ENCODE measurements at regions of chr1 and their contacts with region 1.

Region 1: DNA sequence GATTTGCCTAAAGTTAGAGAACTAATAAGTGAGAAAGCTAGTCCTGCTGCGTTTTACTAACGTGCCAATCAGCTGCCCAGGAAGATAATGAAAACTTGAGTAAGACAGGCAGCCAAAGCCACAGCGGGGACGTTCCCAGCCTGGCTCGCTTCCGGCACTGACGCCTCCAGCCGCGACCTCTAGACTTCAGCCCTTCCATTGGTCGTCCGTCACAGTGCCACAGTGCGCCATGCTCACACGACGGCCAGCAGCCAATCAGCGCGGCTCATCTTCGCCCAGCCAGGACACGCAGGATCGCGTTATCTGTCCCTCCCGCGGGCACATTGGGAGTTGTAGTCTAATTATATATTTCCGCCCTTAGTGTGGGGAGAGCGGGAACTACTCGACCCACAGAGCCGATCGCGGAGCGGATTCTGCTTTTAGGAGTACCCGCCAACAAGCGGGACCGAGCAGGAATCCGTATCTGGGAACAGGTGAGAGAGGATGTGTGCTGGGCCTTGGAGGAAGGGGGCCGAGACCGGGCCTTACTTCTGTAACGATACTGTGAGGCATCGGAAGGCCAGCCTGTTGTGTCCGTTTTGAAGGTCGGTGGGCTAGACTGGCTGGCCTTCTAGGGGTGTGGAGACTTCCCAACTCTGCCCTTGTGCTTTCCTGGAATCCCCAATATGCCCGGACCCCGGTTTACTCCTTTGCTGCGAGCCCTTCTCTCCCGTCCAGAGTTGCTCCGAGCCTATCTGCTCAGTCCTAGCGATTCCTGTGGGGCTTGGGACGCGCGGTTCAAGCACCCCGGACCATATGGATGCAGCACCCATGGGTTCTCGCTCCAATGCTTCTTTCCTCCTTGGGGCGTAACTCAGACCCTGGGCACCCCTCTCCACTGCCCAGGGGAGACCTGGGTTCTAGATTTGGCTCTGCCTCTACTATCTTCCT is at the start of gene FDPS:
- DNase-seq: peak; percentile 99
- ATAC-seq: peak; percentile 97 to 99
- H3K4me3 ChIP-seq: peak within 1 kb of the TSS; percentile 86 to 97 (median 90)
- H3K27ac ChIP-seq: peak within 1 kb of the TSS; percentile 83 to 93 (median 86)
- H3K4me1 ChIP-seq: peaks cover 14% of the 10 kb centered on the region in 2 donors
- H3K27me3 ChIP-seq: no peaks in the 10 kb centered on the region
- CTCF ChIP-seq: peak in 2 of 5 experiments; percentile 25 to 45
- POLR2A ChIP-seq: peak; percentile 56 to 70
- total RNA-seq, gene FDPS: 47.6 to 65.4 (median 49.1) TPM

Region 2: GRCh38 chr1:155208541-155209311 is 100.0 kb before region 1 on chr1 and contains the start of gene MTX1:
- in situ Hi-C with region 1: no loop called
- intact Hi-C with region 1: loop called (anchors 5 kb)
- DNase-seq: peak; percentile 78 to 79
- ATAC-seq: peak; percentile 82 to 84
- H3K4me3 ChIP-seq: peak within 1 kb of the TSS; percentile 88 to 95 (median 90)
- H3K27ac ChIP-seq: peak within 1 kb of the TSS; percentile 93 to 99 (median 96)
- H3K4me1 ChIP-seq: peaks cover 16 to 28% of the 10 kb centered on the region in 2 donors
- H3K27me3 ChIP-seq: no peaks in the 10 kb centered on the region
- CTCF ChIP-seq: peak in 1 of 5 experiments; percentile 4
- POLR2A ChIP-seq: peak; percentile 42 to 67
- total RNA-seq, gene MTX1: 14.4 to 26.9 (median 24.6) TPM

Region 3: DNA sequence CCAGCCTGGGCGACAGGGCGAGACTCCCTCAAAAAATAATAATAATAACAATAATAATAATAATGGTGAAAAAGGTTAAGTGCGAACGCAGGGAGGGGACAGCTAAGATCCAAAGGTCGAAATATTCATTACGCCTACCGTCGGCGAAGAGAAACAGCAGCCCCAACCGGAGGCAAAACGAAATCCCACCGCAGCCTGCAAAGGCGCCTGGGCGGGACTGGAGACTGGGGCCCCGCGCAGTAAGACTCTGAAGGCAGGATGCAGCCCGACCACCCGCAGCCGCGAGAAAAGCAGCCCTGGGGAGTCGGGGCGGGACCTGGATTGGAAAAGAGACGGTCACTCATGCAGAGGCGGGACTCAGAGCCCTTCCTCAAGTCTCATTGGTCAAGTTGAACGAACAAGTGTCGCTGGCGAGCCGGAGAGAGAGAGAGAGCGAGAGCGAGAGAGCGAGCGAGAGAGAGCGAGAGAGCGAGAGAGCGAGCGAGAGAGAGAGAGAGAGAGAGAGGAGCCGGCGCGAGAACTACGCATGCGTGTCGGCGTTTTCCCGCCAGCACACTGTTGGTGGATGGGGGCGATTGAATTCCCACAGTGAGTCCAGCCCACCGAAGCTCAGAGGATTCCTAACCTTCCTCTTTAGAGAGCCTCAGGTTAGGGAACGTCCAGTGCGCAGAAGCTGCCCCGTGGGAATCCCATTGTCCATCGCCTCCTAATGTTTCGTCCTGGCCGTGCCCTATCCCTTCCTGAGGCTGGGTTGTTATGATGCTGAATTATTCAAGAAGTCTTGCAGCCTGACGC is 64.2 kb before region 1 on chr1:
- in situ Hi-C with region 1: no loop called
- intact Hi-C with region 1: loop called (anchors 2 kb)
- DNase-seq: peak; percentile 97 to 98
- ATAC-seq: peak; percentile 96 to 97
- H3K4me3 ChIP-seq: peak overlapping the region; percentile 56 to 79 (median 70)
- H3K27ac ChIP-seq: peak overlapping the region; percentile 80 to 94 (median 90)
- H3K4me1 ChIP-seq: peaks cover 25 to 26% of the 10 kb centered on the region in 2 donors
- H3K27me3 ChIP-seq: no peaks in the 10 kb centered on the region
- CTCF ChIP-seq: peak; percentile 23 to 99 (median 77)
- POLR2A ChIP-seq: peak; percentile 84 to 90

Region 4: DNA sequence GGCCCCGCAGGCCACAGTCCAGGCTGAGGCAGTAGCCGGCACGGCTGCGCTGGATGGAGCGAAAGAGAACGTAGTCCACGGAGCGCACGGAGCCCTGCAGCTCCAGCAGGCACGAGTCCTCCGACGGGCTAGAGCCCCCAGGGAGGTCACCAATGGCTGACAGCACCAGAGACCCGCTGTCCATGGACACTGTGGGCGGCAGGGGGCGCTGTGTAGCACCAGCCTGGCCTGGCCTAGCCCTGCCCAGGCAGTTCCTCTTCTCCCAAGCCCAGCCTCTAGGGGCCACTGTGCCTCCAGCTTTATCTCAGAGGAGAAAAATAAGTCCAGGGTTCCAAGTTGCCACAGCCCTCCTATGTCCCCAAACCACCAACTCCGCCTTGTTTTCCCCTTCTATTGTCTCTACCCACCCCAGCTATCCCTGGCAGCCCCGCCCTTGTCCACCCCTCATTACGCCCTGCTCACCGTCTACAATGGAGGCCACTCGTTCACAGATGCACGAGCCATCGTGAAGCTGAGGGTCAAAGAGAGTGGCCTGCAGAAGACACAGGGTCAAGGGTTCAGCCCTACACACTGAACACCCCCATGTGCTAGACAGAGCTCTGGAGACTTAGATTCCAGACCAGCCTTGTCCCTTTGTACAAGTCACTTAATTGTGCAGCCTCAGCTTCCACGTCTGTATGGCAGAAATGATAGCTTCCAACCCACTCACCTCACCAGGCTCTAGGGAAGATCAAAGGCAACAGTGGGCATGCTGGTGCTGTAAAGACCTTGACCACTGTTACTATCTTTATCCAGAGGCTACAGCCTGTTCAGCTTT is 57.9 kb before region 1 on chr1:
- in situ Hi-C with region 1: loop called in 1 of 4 experiments (anchors 10 kb)
- intact Hi-C with region 1: loop called (anchors 2 kb)
- DNase-seq: peak; percentile 81 to 88
- ATAC-seq: peak; percentile 69 to 82
- H3K4me3 ChIP-seq: peak overlapping the region in 1 of 4 donors; percentile 16
- H3K27ac ChIP-seq: peak overlapping the region in 2 of 4 donors; percentile 36 to 43
- H3K4me1 ChIP-seq: peaks cover 13 to 27% of the 10 kb centered on the region in 2 donors
- H3K27me3 ChIP-seq: no peaks in the 10 kb centered on the region
- CTCF ChIP-seq: peak; percentile 98 to 100 (median 99)
- POLR2A ChIP-seq: no peak

Region 5: GRCh38 chr1:155261852-155262673 is 46.7 kb before region 1 on chr1 and contains the start of gene SCAMP3:
- in situ Hi-C with region 1: loop called in 2 of 4 experiments (anchors 10 kb)
- intact Hi-C with region 1: loop called (anchors 1 kb)
- DNase-seq: peak; percentile 98 to 99
- ATAC-seq: peak; percentile 100
- H3K4me3 ChIP-seq: peak within 1 kb of the TSS; percentile 71 to 86 (median 76)
- H3K27ac ChIP-seq: peak within 1 kb of the TSS; percentile 79 to 90 (median 88)
- H3K4me1 ChIP-seq: peaks cover 20 to 26% of the 10 kb centered on the region in 2 donors
- H3K27me3 ChIP-seq: no peaks in the 10 kb centered on the region
- CTCF ChIP-seq: no peak
- POLR2A ChIP-seq: peak; percentile 67 to 83
- total RNA-seq, gene SCAMP3: 60.0 to 108 (median 79.3) TPM

Region 6: DNA sequence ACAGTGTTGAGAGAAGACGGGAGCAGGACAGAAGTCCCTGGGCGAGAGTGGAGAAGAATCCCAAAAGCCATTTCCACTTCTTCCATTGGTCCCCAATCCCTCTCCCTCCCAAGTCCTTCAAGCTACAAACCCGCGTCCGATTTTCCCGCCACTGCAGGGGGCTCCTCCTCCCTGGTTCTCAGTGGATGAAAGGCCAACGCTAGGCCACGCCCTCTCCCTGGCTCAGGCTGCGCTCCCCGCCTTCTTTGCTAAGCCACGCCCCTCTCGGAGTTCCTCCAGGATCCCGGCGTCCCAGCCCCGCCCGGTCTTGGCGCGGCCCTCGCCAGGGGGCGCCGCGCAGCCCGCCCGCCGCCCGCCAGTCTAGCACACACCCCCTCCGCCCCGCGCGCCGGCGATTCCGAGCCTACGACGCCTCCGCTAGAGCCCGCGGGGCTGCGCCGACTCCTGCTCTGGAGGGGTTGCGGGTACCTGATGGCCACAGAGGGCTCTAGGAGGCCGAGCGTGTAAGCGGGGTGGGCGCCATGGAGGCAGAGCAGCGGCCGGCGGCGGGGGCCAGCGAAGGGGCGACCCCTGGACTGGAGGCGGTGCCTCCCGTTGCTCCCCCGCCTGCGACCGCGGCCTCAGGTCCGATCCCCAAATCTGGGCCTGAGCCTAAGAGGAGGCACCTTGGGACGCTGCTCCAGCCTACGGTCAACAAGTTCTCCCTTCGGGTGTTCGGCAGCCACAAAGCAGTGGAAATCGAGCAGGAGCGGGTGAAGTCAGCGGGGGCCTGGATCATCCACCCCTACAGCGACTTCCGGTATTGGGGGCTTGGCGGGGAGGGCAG is 31.5 kb before region 1 on chr1 and contains the start of gene HCN3:
- in situ Hi-C with region 1: no loop called
- intact Hi-C with region 1: loop called (anchors 1 kb)
- DNase-seq: peak; percentile 96
- ATAC-seq: peak; percentile 83 to 88
- H3K4me3 ChIP-seq: peak within 1 kb of the TSS; percentile 78 to 97 (median 80)
- H3K27ac ChIP-seq: peak within 1 kb of the TSS; percentile 66 to 71 (median 68)
- H3K4me1 ChIP-seq: peaks cover 12 to 25% of the 10 kb centered on the region in 2 donors
- H3K27me3 ChIP-seq: no peaks in the 10 kb centered on the region
- CTCF ChIP-seq: peak; percentile 55 to 83 (median 65)
- POLR2A ChIP-seq: no peak
- total RNA-seq, gene HCN3: 0.18 to 1.5 (median 1.1) TPM

Region 7: GRCh38 chr1:155859234-155859829 is 550.6 kb after region 1 on chr1 and contains the start of gene SYT11:
- in situ Hi-C with region 1: no loop called
- intact Hi-C with region 1: loop called (anchors 1 kb)
- DNase-seq: peak; percentile 90 to 92
- ATAC-seq: peak; percentile 94 to 98
- H3K4me3 ChIP-seq: peak within 1 kb of the TSS; percentile 60 to 75 (median 62)
- H3K27ac ChIP-seq: peak within 1 kb of the TSS; percentile 84 to 92 (median 89)
- H3K4me1 ChIP-seq: peaks cover 26 to 30% of the 10 kb centered on the region in 2 donors
- H3K27me3 ChIP-seq: no peaks in the 10 kb centered on the region
- CTCF ChIP-seq: no peak
- POLR2A ChIP-seq: peak in 1 of 2 donors; percentile 23
- total RNA-seq, gene SYT11: 2.4 to 5.3 (median 3.1) TPM

Measured in gastrocnemius medialis (tissue), 4 donors.